SK-N-SH (cell line): ENCODE measurements at regions of chr5 and their contacts with region 1.

Region 1: GRCh38 chr5:122704243-122705036 is 70.4 kb upstream of the SNX2 start:
- DNase-seq: peak; percentile 25
- H3K4me3 ChIP-seq: no peak overlapping the region
- H3K27ac ChIP-seq: no peak overlapping the region
- H3K4me1 ChIP-seq: no peaks in the 10 kb centered on the region
- H3K27me3 ChIP-seq: no peaks in the 10 kb centered on the region
- CTCF ChIP-seq: peak; percentile 79
- EP300 ChIP-seq: no peak
- RAD21 ChIP-seq: peak; percentile 62

Region 2: GRCh38 chr5:122715095-122715494 is 10.7 kb after region 1 on chr5:
- CTCF ChIA-PET with region 1: interaction called, 19 read pairs
- POLR2A ChIA-PET with region 1: no interaction called
- DNase-seq: no peak
- H3K4me3 ChIP-seq: no peak overlapping the region
- H3K27ac ChIP-seq: no peak overlapping the region
- H3K4me1 ChIP-seq: no peaks in the 10 kb centered on the region; a peak in 1 of 4 replicates
- H3K27me3 ChIP-seq: no peaks in the 10 kb centered on the region
- CTCF ChIP-seq: no peak
- EP300 ChIP-seq: no peak
- RAD21 ChIP-seq: no peak